GM12878 (cell line): ENCODE measurements at regions of chr2 and their contacts with region 1.

Region 1: DNA sequence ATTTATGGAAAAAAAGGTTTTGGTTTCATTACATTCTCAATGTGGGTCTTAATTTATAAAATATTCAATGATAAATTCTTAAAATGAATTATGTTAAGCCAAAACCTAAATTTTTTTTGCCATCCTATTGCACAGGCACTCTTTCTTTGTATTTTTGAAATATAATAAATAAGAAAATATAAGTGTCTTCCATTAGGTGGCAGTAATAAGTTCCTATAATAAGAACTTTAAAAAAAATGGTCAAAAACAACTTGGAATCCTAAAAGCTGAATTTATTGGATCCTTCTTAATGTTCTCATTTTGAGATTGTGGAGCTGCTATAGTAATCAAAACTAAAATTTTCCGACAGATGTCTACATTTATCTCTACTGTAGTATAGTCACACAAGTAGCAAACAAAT is 5.7 kb downstream of the CALCRL start:
- DNase-seq: no peak
- ATAC-seq: no peak
- H3K4me3 ChIP-seq: no peak overlapping the region
- H3K27ac ChIP-seq: no peak overlapping the region
- H3K4me1 ChIP-seq: no peaks in the 10 kb centered on the region
- H3K27me3 ChIP-seq: no peaks in the 10 kb centered on the region
- CTCF ChIP-seq: peak in 2 of 3 experiments; percentile 3 to 5; a peak in 1 of 6 replicates
- EP300 ChIP-seq: no peak
- POLR2A ChIP-seq: no peak
- RAD21 ChIP-seq: no peak

Region 2: DNA sequence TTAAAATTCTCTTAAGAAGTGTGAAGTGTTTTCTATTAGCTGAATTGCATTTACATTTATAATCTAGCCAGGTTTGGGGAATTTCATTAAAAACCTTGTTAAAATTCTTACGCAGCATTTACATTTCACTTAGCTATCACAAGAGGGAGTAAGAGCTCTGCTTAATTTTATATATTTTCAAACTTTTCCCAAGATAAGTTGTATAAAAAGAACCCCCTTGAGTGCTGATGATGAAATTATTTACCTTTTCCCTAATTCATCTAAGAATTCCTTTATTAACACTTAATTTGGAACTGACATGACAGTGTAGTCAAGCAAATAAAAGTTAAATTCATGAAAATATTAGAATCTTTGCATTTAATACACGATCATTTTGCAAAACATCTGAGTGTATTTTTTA is 539.2 kb before region 1 on chr2:
- CTCF ChIA-PET with region 1: interaction called, 13 read pairs
- POLR2A ChIA-PET with region 1: no interaction called
- RAD21 ChIA-PET with region 1: interaction called, 17 read pairs
- SMC1A ChIA-PET with region 1: interaction called, 18 read pairs
- in situ Hi-C with region 1: no loop called
- intact Hi-C with region 1: no loop called
- DNase-seq: no peak
- ATAC-seq: no peak
- H3K4me3 ChIP-seq: no peak overlapping the region
- H3K27ac ChIP-seq: no peak overlapping the region
- H3K4me1 ChIP-seq: no peaks in the 10 kb centered on the region
- H3K27me3 ChIP-seq: no peaks in the 10 kb centered on the region
- CTCF ChIP-seq: peak in 2 of 3 experiments; percentile 8 to 34; a peak in 2 of 6 replicates
- EP300 ChIP-seq: no peak
- POLR2A ChIP-seq: no peak
- RAD21 ChIP-seq: peak; percentile 45

Region 3: DNA sequence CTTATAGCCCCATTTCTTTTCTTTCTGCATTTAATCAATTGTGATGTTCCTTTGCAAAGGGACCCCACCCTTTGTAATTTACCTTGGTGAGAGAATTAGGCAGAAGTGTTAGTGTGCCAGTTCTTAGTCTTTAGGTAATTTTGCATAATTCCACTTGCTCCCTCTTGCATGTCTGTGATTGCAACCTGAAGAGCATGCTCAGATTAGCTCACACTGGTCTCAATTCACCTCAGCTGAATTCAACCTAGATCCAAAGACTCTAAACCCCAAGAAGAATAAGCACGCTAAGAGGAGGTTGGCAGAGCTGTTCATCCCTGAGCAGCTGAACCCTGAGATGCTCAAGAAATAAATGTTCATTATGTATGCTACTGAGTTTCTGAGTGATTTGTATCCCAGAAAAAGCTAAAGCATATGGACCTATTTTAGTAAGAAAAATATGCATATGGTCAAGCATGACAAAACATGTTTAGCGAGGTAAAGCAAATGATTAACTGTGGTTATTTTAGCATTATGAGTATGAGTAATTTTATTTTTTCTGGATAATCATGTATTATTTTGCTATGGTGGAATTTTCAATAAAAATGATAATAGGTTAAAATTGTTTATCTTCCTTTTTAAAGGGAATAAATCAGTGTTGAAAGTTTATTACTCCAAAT is 294.2 kb before region 1 on chr2:
- CTCF ChIA-PET with region 1: interaction called, 7 read pairs
- POLR2A ChIA-PET with region 1: no interaction called
- RAD21 ChIA-PET with region 1: interaction called, 5 read pairs
- SMC1A ChIA-PET with region 1: interaction called, 4 read pairs
- in situ Hi-C with region 1: loop called (anchors 10 kb)
- intact Hi-C with region 1: no loop called
- DNase-seq: no peak
- ATAC-seq: peak; percentile 57
- H3K4me3 ChIP-seq: no peak overlapping the region
- H3K27ac ChIP-seq: no peak overlapping the region
- H3K4me1 ChIP-seq: no peaks in the 10 kb centered on the region
- H3K27me3 ChIP-seq: no peaks in the 10 kb centered on the region
- CTCF ChIP-seq: no peak
- EP300 ChIP-seq: no peak
- POLR2A ChIP-seq: no peak
- RAD21 ChIP-seq: no peak

Region 4: GRCh38 chr2:187319441-187320108 is 122.8 kb before region 1 on chr2:
- CTCF ChIA-PET with region 1: interaction called, 11 read pairs
- POLR2A ChIA-PET with region 1: no interaction called
- RAD21 ChIA-PET with region 1: interaction called, 14 read pairs
- SMC1A ChIA-PET with region 1: interaction called, 16 read pairs
- in situ Hi-C with region 1: no loop called
- intact Hi-C with region 1: no loop called
- DNase-seq: no peak
- ATAC-seq: no peak; the same call in 2 of the 3 replicates
- H3K4me3 ChIP-seq: no peak overlapping the region
- H3K27ac ChIP-seq: no peak overlapping the region
- H3K4me1 ChIP-seq: no peaks in the 10 kb centered on the region
- H3K27me3 ChIP-seq: no peaks in the 10 kb centered on the region
- CTCF ChIP-seq: no peak
- EP300 ChIP-seq: no peak
- POLR2A ChIP-seq: no peak
- RAD21 ChIP-seq: no peak

Region 5: DNA sequence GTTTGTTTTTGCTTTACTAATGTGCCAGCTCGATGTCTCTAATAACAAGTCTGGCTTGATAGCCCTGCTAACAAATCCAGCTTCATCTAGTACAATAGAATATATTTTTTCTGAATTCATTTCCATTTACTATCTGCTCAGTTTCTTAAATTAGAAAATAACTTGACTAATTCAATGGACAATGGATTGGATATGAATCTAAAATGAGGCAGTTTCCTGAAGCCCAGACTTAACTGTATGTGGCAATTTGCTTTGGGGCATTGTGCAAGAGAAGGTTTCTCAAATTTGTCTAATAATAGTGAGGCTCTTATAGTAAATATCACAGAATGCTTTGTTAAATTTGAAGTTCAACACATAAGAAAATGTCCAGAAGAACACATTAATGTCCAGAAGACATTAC is 20.1 kb before region 1 on chr2:
- CTCF ChIA-PET with region 1: interaction called, 8 read pairs
- POLR2A ChIA-PET with region 1: interaction called, 7 read pairs
- RAD21 ChIA-PET with region 1: interaction called, 12 read pairs
- SMC1A ChIA-PET with region 1: interaction called, 9 read pairs
- in situ Hi-C with region 1: no loop called
- intact Hi-C with region 1: no loop called
- DNase-seq: no peak
- ATAC-seq: no peak
- H3K4me3 ChIP-seq: no peak overlapping the region
- H3K27ac ChIP-seq: no peak overlapping the region
- H3K4me1 ChIP-seq: no peaks in the 10 kb centered on the region
- H3K27me3 ChIP-seq: no peaks in the 10 kb centered on the region
- CTCF ChIP-seq: no peak
- EP300 ChIP-seq: no peak
- POLR2A ChIP-seq: no peak
- RAD21 ChIP-seq: no peak